Naive thymus-derived CD8-positive, alpha-beta T cell (primary cell): ENCODE measurements at regions of chr6 and their contacts with region 1.

Region 1: GRCh38 chr6:149545754-149546528 is at the start of gene PPIL4:
- DNase-seq: peak; percentile 93 to 98 (median 97)
- ATAC-seq: peak; percentile 83 to 85
- H3K4me3 Mint-ChIP-seq: peak within 1 kb of the TSS; percentile 79 to 100 (median 99)
- H3K27ac Mint-ChIP-seq: peak within 1 kb of the TSS; percentile 97 to 100 (median 100)
- H3K4me1 Mint-ChIP-seq: peaks cover 22 to 45% (median 39%) of the 10 kb centered on the region in 4 donors
- H3K27me3 Mint-ChIP-seq: peaks cover 0 to 4% (median 0%) of the 10 kb centered on the region in 5 donors
- polyA plus RNA-seq, gene PPIL4: 7.1 to 11.8 (median 11.8) TPM

Region 2: GRCh38 chr6:149431905-149432775 is 113.8 kb before region 1 on chr6:
- POLR2A ChIA-PET with region 1: no interaction called
- DNase-seq: peak; percentile 70 to 93 (median 84)
- ATAC-seq: peak; percentile 91 to 96
- H3K4me3 Mint-ChIP-seq: peak overlapping the region; percentile 45 to 86 (median 74)
- H3K27ac Mint-ChIP-seq: peak overlapping the region in 7 of 10 donors; percentile 24 to 89 (median 83)
- H3K4me1 Mint-ChIP-seq: peaks cover 1 to 8% (median 5%) of the 10 kb centered on the region in 4 donors
- H3K27me3 Mint-ChIP-seq: peaks cover 0 to 4% (median 0%) of the 10 kb centered on the region in 5 donors

Region 3: GRCh38 chr6:149484733-149485700 is 60.9 kb before region 1 on chr6 and contains the start of gene ZC3H12D:
- POLR2A ChIA-PET with region 1: interaction called, 16 read pairs
- DNase-seq: peak; percentile 59 to 95 (median 80)
- ATAC-seq: peak; percentile 76 to 85
- H3K4me3 Mint-ChIP-seq: peak within 1 kb of the TSS; percentile 84 to 99 (median 94)
- H3K27ac Mint-ChIP-seq: peak within 1 kb of the TSS; percentile 95 to 99 (median 98)
- H3K4me1 Mint-ChIP-seq: peaks cover 28 to 75% (median 53%) of the 10 kb centered on the region in 4 donors
- H3K27me3 Mint-ChIP-seq: no peaks in the 10 kb centered on the region
- polyA plus RNA-seq, gene ZC3H12D: 1.1 to 1.7 (median 1.5) TPM

Region 4: DNA sequence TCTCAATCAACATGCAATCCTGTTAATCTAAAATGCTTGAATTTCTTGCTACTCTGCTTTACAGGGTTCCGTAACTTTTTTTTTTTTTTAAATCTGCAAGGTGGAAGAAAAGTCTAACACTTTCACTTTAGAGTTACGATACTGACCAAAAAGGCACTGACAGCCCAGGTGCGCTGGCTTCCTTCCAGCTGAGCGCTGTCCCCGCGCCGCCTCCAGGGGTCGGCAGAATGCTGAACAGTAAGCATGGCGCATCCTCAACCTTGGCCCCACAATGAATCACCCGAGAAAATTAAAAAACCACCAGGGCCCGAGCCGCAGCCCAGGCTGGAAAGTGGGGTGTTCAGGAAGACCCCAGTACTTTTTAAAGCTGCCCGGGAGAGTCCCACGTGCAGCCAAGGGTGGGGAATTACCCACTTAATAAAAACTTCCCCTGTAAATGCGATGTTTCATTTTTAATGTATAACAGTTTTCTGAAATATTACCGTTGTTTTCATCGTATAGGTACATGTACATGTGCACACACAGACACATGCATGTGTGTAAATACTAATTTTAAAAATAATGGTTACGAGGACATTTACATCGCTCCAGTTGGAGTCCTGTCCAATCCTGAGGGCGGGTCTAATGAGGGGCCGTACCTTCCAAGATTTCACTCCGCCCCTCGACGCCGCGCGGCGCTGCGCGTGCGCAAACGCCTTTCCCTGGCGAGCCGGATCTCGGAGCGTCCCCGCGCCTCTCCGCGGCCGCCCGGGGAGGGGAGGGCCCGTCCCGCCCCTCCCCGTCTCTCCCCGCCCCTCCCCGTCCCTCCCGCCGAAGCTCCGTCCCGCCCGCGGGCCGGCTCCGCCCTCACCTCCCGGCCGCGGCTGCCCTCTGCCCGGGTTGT is 19.8 kb after region 1 on chr6 and contains the start of gene GINM1:
- POLR2A ChIA-PET with region 1: interaction called, 52 read pairs
- DNase-seq: peak; percentile 92 to 96 (median 96)
- ATAC-seq: peak; percentile 80 to 83
- H3K4me3 Mint-ChIP-seq: peak within 1 kb of the TSS; percentile 90 to 99 (median 97)
- H3K27ac Mint-ChIP-seq: peak within 1 kb of the TSS; percentile 93 to 98 (median 96)
- H3K4me1 Mint-ChIP-seq: peaks cover 3 to 25% (median 19%) of the 10 kb centered on the region in 4 donors
- H3K27me3 Mint-ChIP-seq: peaks cover 0 to under 1% (median 0%) of the 10 kb centered on the region in 5 donors
- polyA plus RNA-seq, gene GINM1: 15.9 to 20.7 (median 20.1) TPM